ENCODE measurements at regions of chr11 and their contacts with region 1.

Region 1: GRCh38 chr11:17389211-17389956 is 925 bp upstream of the KCNJ11 start:
- DNase-seq: peak; percentile 57 to 87 (median 80)
- ATAC-seq: peak; percentile 96
- H3K4me3 ChIP-seq: peak overlapping the region; percentile 62
- H3K4me3 Mint-ChIP-seq: peak overlapping the region; percentile 77 to 90 (median 83)
- H3K27ac ChIP-seq: peak overlapping the region; percentile 66
- H3K27ac Mint-ChIP-seq: peak overlapping the region in 7 of 9 donors; percentile 12 to 84 (median 55)
- H3K4me1 ChIP-seq: peaks cover 0 to 4% of the 10 kb centered on the region in 2 donors
- H3K4me1 Mint-ChIP-seq: peaks cover 0 to 9% (median 5%) of the 10 kb centered on the region in 7 donors
- H3K27me3 ChIP-seq: no peaks in the 10 kb centered on the region
- H3K27me3 Mint-ChIP-seq: peaks cover 0 to 16% (median 0%) of the 10 kb centered on the region in 5 donors

Region 2: DNA sequence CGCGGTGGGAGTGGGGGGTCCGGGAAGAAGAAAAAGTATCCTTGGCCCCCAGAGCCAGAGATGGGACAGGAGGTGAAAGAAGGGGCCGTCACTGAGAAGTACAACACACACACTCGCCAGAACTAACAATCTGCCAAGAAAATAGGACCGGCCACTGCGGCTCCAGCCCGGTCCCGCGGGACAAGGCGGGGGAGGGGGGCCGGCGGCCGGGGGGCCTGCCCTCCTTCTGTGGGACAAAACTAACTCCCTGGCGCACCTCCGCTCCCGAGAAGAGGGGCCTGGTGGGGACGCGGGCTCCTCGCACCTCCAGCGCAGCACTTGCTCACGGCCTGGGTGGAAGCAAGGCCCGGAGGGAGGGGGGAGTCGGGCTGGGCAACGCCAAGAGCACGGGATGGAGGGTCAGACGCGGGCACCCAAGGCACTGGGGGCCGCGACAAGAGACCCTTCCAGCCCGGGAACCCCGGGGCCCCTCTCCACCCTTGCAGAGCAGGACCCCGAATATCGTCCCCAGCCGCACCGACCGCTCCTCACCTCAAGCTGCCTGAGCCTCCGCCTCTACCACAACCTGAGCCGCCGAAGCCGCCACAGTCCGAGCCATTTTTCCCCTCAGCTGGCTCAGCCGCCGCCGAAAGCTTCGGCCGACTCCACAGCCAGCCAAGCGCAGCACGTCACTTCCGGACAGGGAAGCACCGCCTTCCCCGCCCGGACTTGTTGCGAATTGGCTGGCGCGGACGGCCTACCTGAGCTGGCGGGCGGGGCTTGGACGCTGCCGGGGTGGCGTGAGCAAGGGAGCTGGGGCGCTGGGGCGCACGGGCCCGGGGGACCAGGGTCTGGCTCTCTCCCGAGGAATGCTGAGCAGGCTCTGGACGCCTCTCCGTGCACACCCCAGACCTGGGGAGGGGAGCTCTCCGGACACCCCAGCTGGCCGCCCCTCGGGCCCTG is 181.8 kb before region 1 on chr11 and contains the start of gene PIK3C2A:
- CTCF ChIA-PET with region 1: no interaction called
- POLR2A ChIA-PET with region 1: no interaction called
- intact Hi-C with region 1: loop called in 1 of 2 experiments (anchors 1 kb)
- DNase-seq: peak; percentile 84 to 94 (median 91)
- ATAC-seq: peak; percentile 98
- H3K4me3 ChIP-seq: peak within 1 kb of the TSS; percentile 93
- H3K4me3 Mint-ChIP-seq: peak within 1 kb of the TSS; percentile 90 to 99 (median 98)
- H3K27ac ChIP-seq: peak within 1 kb of the TSS; percentile 93
- H3K27ac Mint-ChIP-seq: peak within 1 kb of the TSS; percentile 87 to 99 (median 97)
- H3K4me1 ChIP-seq: peaks cover 15 to 19% of the 10 kb centered on the region in 2 donors
- H3K4me1 Mint-ChIP-seq: peaks cover 34 to 57% (median 48%) of the 10 kb centered on the region in 7 donors
- H3K27me3 ChIP-seq: no peaks in the 10 kb centered on the region
- H3K27me3 Mint-ChIP-seq: no peaks in the 10 kb centered on the region
- total RNA-seq, gene PIK3C2A: 25.4 to 56.4 (median 42.0) TPM

Region 3: GRCh38 chr11:17371614-17372013 is 17.8 kb before region 1 on chr11:
- CTCF ChIA-PET with region 1: no interaction called
- POLR2A ChIA-PET with region 1: no interaction called
- intact Hi-C with region 1: no loop called
- DNase-seq: no peak
- ATAC-seq: no peak
- H3K4me3 ChIP-seq: no peak overlapping the region
- H3K4me3 Mint-ChIP-seq: no peak overlapping the region
- H3K27ac ChIP-seq: no peak overlapping the region
- H3K27ac Mint-ChIP-seq: no peak overlapping the region
- H3K4me1 ChIP-seq: no peaks in the 10 kb centered on the region
- H3K4me1 Mint-ChIP-seq: peaks cover 0 to 10% (median 0%) of the 10 kb centered on the region in 7 donors
- H3K27me3 ChIP-seq: no peaks in the 10 kb centered on the region
- H3K27me3 Mint-ChIP-seq: no peaks in the 10 kb centered on the region

Region 4: GRCh38 chr11:17504330-17505107 is 115.1 kb after region 1 on chr11:
- CTCF ChIA-PET with region 1: interaction called, 39 read pairs
- POLR2A ChIA-PET with region 1: no interaction called
- intact Hi-C with region 1: loop called (anchors 1 kb)
- DNase-seq: peak; percentile 63 to 83 (median 77)
- ATAC-seq: peak; percentile 79
- H3K4me3 ChIP-seq: no peak overlapping the region
- H3K4me3 Mint-ChIP-seq: no peak overlapping the region
- H3K27ac ChIP-seq: no peak overlapping the region
- H3K27ac Mint-ChIP-seq: no peak overlapping the region
- H3K4me1 ChIP-seq: no peaks in the 10 kb centered on the region
- H3K4me1 Mint-ChIP-seq: no peaks in the 10 kb centered on the region
- H3K27me3 ChIP-seq: no peaks in the 10 kb centered on the region
- H3K27me3 Mint-ChIP-seq: peaks cover 0 to 12% (median 5%) of the 10 kb centered on the region in 5 donors

Region 5: DNA sequence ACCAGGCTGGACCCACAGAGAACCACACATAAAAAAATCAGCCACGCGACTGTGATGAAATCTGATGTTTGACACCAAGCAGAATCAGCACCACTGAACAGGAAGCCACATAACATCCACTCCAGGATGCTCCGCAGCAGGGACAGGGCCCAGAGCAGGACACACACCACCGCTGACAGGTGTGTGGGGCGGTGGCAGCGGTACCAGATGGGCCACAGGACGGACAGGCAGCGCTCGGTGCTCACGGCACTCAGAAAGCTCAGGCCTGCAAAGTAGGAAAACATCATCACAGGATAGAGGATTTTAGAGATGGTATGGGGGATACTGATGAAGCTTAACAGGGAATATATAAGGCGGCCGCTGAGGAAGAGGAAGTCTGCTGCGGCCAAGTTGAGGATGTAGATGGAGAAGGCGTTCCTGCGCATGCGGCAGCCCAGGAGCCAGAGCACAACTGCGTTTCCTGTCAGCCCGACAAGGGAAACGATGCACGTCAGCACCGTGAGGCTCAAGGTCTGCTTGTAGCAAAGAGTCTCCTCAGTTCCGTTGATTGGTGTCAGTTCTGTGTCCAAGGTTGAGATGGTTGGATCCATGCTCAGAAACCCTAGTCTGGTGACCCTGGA is 1544.9 kb after region 1 on chr11:
- CTCF ChIA-PET with region 1: no interaction called
- POLR2A ChIA-PET with region 1: no interaction called
- intact Hi-C with region 1: no loop called
- DNase-seq: no peak
- ATAC-seq: no peak
- H3K4me3 ChIP-seq: no peak overlapping the region
- H3K4me3 Mint-ChIP-seq: no peak overlapping the region
- H3K27ac ChIP-seq: no peak overlapping the region
- H3K27ac Mint-ChIP-seq: no peak overlapping the region
- H3K4me1 ChIP-seq: no peaks in the 10 kb centered on the region
- H3K4me1 Mint-ChIP-seq: no peaks in the 10 kb centered on the region
- H3K27me3 ChIP-seq: no peaks in the 10 kb centered on the region
- H3K27me3 Mint-ChIP-seq: peaks cover 14 to 34% (median 16%) of the 10 kb centered on the region in 5 donors